Heart left ventricle (tissue), 16 donors: ENCODE measurements at regions of chr1 and their contacts with region 1.

Region 1: DNA sequence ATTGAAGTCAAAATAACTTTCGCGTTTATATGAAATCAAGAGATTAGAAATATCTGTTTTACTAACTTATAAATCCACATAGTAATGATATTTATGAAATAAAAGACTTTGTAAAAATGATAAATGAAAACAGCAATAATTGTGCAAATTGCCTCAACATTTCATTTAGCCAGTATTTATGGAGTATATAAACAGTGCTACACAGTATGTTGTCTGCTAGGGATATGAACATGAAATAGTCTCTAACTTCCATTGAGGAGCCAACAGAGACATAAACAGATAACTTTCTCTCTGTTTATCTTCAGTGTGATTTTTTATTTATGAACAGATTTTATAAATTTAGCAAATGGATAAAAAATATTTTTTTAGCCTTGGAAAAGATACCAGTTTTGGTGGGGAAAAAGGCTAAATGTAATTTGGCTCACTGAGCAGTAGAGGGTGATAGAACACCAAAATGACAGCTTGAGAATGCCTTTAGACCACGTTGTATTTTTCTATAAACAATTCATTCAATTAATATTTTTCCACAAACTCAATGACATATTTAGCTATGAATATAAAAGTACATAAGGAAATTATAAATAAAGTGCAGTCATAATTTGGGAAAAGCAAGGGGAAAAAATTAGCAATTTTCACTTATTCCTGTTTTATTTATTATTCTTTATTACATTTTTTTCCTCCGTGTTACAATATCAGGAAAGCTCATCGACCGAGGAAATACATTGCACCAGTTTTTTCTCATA is 47.5 kb upstream of the EEIG2 start:
- DNase-seq: no peak
- ATAC-seq: peak in 1 of 4 donors; percentile 47
- H3K4me3 ChIP-seq: no peak overlapping the region
- H3K27ac ChIP-seq: no peak overlapping the region
- H3K4me1 ChIP-seq: no peaks in the 10 kb centered on the region
- H3K27me3 ChIP-seq: peaks cover 0 to 3% (median 0%) of the 10 kb centered on the region in 9 donors
- CTCF ChIP-seq: peak; percentile 75 to 95 (median 91)
- POLR2A ChIP-seq: no peak

Region 2: DNA sequence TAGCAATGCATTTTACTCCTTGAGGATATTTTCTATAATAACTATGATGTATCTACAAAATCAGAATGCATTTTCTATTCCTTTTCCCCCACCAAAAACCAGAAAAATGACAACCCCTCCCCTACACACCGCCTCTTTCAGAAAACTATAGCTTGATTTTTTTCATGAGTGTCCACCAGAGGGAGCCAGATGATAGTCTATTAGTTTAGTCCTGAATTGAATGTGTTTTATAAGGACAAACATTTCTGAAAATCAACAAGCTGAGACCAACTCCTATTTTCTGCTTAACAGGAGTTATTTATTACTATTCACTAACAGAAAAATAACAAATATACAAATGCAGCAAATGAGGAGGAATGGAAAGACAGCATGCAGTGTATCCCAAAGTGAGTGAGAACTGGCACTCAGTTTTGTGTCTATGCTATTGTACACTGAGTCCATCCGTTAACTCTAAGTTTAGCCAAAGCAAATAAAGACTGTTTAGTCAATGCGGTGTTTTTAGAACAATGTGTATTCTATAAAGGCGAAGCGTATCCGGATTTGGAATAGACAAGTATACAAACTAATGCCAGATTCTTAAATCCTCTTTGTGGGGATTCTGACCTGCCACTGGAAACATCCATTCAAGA is 730.1 kb before region 1 on chr1:
- intact Hi-C with region 1: loop called in 1 of 10 experiments (anchors 10 kb)
- DNase-seq: peak in 2 of 5 donors; percentile 43
- ATAC-seq: peak in 3 of 4 donors; percentile 36 to 50 (median 49)
- H3K4me3 ChIP-seq: no peak overlapping the region
- H3K27ac ChIP-seq: no peak overlapping the region
- H3K4me1 ChIP-seq: peaks cover 0 to 34% (median 2%) of the 10 kb centered on the region in 12 donors
- H3K27me3 ChIP-seq: no peaks in the 10 kb centered on the region
- CTCF ChIP-seq: peak; percentile 65 to 85 (median 74)
- POLR2A ChIP-seq: no peak

Region 3: DNA sequence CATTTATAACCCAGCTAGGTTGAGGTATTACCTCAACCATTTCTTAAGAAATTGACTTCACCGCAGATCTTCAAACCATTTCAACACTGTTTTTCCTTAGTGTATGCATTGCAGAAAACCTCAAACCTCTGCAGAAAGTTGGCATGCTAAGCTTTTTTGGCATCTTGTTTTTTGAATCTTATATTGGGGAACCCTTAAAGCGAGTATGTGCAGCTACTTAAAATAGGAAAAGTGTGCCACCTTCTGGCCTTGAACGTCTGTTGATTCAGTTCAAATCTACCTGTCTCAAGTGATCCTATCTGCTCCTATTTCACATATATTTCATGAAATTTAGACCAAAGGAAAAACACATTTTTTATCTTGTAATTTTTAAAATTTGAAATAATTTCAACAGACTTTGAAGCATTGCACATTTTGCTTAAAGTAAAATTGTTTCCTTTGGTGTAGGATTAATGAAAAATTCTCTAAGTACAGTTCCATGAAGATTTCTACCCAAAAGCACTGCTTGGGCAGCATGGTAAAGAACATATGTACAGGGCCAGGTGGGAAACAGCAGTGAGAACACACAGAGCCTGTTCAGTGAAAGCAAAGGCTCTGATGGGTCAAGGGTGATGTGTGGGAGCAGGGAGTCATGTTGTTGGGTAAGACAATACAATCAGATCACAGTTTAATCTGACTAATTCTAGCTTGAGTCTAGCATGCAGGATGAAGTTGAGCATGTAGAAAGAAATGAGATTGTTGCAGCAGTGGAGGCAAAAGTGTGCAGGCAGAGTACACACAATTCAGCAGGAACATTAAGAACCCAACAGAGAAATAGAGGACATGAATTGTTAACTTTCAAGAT is 131.3 kb after region 1 on chr1:
- intact Hi-C with region 1: loop called (anchors 1 to 2 kb)
- DNase-seq: peak in 2 of 5 donors; percentile 38 to 40
- ATAC-seq: peak; percentile 53 to 72 (median 61)
- H3K4me3 ChIP-seq: no peak overlapping the region
- H3K27ac ChIP-seq: peak overlapping the region in 1 of 12 donors; percentile 96
- H3K4me1 ChIP-seq: peaks cover 0 to 48% (median 0%) of the 10 kb centered on the region in 12 donors
- H3K27me3 ChIP-seq: no peaks in the 10 kb centered on the region
- CTCF ChIP-seq: peak; percentile 52 to 82 (median 72)
- POLR2A ChIP-seq: no peak

Region 4: DNA sequence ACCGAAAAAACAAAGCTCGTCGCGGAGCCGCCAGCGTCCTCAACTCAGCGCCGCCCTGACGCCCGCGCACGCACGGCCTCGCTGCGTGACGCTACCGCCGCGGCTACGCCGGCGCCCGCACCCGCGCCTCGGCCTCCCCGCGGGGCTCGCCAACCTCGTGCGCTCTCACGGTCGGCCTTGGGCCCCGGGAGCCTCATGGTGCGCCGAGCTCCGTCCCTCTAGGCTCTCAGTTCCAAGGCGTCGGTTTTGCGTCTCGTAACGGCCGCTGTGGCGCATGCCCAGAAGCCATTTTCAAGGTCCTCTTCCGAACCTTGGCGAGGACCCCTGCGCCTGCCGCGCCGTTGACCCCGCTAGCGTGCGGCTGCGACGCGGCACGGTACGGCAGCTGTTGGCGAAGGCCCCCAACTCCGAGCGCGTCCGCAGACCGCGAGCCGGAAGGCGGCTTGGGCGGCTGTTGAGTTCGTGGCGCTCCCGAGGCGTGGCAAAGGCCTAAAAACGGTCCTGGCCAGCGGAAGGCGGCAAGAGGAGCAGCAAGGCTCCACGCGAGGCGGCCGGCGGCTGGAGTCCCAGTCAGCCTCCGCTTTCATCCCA is 148.7 kb after region 1 on chr1 and contains the start of gene HENMT1:
- intact Hi-C with region 1: no loop called
- DNase-seq: peak; percentile 57 to 83 (median 65)
- ATAC-seq: peak in 3 of 4 donors; percentile 74 to 90 (median 86)
- H3K4me3 ChIP-seq: peak within 1 kb of the TSS; percentile 50 to 73 (median 59)
- H3K27ac ChIP-seq: peak within 1 kb of the TSS; percentile 81 to 99 (median 90)
- H3K4me1 ChIP-seq: peaks cover 0 to 13% (median 5%) of the 10 kb centered on the region in 12 donors
- H3K27me3 ChIP-seq: no peaks in the 10 kb centered on the region
- CTCF ChIP-seq: no peak
- POLR2A ChIP-seq: peak in 1 of 2 donors; percentile 38
- total RNA-seq, gene HENMT1: 0.44 to 4.5 (median 0.93) TPM

Region 5: GRCh38 chr1:108892356-108893140 is 380.1 kb after region 1 on chr1:
- intact Hi-C with region 1: loop called in 1 of 10 experiments (anchors 5 kb)
- DNase-seq: no peak
- ATAC-seq: no peak
- H3K4me3 ChIP-seq: no peak overlapping the region
- H3K27ac ChIP-seq: no peak overlapping the region
- H3K4me1 ChIP-seq: peaks cover 0 to 8% (median 0%) of the 10 kb centered on the region in 12 donors
- H3K27me3 ChIP-seq: no peaks in the 10 kb centered on the region
- CTCF ChIP-seq: no peak
- POLR2A ChIP-seq: no peak